ENCODE measurements at regions of chr1 and their contacts with region 1.

Region 1: DNA sequence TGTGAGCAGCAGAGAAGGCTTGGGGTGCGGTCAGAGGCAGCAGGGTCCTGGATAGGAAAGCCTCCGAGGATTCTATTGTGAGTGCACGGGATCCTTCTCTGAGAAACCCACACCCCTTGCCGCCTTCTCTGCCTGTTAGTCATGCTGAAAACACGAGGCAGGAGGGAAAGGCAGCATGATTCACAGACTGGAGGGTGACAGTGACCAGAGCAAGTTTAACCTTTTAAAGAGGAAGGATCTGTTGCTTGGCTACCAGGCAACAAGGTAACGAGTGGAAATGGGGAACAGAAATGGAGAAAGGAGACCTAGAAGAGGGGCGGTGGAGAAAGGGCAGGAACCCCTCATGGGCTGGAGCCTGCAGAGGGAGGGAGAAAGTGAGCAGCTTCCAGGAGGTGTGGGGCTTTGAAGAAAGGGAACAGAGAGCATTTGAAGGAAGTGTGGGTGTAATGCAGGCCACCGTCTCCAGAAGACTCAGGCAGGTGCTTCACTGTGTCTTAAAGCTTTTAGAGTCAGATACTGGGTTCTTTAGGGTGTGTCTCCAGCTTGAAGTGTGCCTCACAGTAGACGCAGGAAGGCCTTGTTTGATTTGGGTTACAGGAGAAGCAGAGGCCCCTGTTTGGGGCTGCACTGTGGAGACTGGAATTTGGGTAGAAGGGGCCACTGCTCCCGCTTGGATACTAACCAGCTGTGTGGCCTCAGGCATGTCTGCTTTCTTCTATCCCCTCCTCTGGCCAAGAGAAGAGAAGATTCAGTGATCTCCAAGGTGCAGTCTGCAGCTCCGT is 19.1 kb downstream of the OPTC start:
- DNase-seq: peak; percentile 42

Region 2: DNA sequence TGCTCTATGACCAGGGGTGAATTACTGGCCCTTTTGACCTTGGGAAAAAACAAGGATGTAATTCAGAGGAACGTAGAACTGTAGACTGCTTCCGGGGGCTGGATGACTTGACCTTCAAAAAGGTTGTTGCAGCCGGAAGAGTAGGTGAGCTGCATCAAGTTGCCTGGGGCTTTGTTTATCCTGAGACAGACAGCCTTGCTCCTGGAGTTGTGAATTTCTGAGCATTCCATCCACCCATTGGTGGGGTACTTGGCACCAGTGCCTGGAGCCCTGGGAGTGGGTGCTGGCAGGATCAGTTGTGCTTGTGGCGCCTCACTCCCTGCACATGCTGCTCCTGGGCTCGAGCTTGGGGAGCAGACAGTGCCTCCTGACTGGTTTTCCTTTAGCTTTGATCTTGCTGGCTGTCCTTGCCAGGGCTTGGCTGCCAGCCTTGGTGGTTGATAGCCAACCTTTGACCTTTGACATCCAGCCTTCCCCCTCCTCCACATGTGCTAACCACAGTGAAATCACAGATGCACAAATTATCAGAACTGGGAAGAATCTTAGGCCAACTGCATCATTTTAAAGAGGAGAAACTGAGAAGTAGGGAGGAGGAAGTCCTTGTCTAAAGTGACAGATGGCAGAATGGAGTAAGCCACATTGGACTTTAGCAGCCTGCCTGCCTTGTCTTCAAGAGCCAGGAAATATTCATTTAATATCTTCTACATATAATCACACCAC is 410.9 kb before region 1 on chr1:
- in situ Hi-C with region 1: no loop called
- DNase-seq: no peak

Region 3: DNA sequence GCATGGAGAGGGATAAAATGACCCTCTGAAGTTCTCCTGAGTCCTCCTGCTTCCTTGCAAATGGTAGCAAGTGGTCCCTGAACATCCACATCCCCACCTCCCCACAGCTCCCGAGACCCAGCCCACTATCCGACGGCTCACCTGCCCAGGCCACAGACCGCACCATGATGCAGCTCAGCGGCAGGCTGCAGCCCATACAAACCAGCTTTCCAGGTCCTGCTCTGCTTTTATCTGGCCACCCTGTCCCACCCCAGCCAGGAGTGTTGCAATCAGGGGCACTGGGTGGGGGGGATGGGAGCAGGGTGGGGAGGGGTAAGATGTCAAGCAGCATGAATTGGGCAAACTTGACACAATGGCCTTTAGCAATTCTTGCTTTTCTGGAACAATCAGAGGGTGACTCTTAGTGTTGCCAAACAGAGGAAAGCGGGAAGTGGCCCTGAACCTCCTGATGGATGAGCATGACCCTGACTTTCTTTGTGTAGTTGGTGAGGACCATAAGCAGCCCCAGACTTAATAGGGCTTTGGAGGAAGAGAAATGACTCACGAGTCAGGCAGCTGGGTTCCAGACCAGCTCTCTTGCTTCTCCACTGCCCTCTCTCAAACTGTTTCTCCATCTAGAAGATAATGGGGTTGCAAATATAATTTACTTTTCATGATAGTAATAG is 283.4 kb before region 1 on chr1 and contains the start of gene CHIT1:
- in situ Hi-C with region 1: no loop called
- DNase-seq: no peak

Region 4: GRCh38 chr1:203702130-203702577 is 189.1 kb after region 1 on chr1:
- in situ Hi-C with region 1: loop called (anchors 10 kb)
- DNase-seq: peak; percentile 74

Region 5: DNA sequence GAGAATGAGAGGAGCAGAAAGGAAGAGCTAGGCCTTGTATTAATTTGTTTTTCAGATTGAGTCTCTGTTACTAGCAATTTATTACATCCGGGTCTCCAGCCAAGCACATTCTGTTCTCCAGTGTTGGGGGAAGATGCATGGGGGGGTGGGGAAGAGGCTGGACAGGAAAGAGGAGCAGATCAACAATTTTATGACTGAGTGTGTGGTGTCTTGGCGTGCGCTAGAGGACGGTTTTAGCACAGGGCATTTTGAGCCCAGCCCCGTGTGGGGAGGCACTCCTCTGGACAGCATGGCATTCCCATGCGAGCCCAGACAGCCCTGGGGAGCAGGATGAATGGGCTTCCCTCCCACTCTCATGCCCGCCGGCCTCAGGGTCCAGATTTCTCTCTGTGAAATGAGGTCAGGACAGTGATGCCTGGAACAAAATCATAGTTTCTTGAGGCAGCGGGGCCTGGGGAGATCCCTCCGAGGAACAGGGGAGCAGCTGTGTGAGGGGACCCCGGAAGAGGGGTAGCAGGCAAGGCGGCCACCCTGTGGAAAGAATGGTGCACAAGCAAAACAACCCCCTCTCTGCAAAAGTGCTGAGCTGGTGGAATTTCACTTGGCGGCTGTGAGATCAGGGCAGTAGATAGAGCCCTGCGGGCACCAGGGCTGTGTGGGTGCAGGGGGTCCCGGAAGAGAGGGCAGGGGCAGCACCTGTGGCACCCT is 576.2 kb after region 1 on chr1:
- in situ Hi-C with region 1: no loop called
- DNase-seq: no peak

Measured in KBM-7 (cell line).